ENCODE measurements at regions of chr10 and their contacts with region 1.

Region 1: DNA sequence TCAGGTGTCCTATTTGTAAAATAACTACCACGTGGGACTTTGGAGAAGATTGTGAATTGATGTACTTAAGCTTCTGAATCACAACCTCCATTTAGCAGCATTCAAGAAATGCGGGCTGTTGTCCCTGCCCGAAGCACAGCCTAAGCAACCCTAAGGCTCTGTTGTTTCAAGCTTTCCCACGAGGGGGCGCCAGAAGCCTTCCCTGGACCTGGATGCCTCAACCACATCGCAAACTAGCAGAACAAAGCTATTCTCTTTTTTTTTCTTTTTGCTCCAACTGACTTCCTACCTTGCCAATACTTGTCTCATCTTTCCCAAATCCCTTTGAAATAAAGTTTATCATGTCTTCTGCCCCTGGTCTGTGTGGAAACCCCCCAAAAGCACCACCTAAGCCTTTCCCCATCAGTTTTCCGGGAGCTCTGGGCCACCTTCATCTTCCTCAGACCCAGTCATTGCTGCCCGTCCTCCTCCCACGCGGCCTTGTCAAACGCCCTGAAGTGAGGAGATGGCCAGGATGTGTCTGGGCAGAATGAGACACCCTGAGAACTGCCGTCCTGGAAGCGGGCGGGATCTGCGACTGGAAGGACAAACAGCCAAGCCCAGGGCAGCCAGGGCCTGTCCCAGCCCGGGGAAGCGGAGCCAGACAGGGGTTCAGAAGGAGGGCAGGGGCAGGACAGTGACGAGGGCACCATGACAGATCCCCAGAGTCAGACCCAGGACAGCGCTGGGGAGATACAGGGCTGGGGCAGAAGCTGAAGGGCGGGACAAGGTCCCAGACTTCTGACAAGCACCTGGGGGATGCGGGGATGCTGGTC is 112.7 kb downstream of the SLIT1 start:
- DNase-seq: peak; percentile 94
- ATAC-seq: peak; percentile 82
- H3K4me3 Mint-ChIP-seq: no peak overlapping the region
- H3K27ac Mint-ChIP-seq: no peak overlapping the region
- H3K4me1 Mint-ChIP-seq: peaks cover 10% of the 10 kb centered on the region
- H3K27me3 Mint-ChIP-seq: peaks cover 22% of the 10 kb centered on the region
- CTCF ChIP-seq: peak; percentile 87

Region 2: GRCh38 chr10:97016728-97017473 is 56.2 kb before region 1 on chr10:
- CTCF ChIA-PET with region 1: no interaction called
- POLR2A ChIA-PET with region 1: no interaction called
- intact Hi-C with region 1: no loop called
- DNase-seq: peak; percentile 88
- ATAC-seq: peak; percentile 81
- H3K4me3 Mint-ChIP-seq: peak overlapping the region; percentile 59
- H3K27ac Mint-ChIP-seq: peak overlapping the region; percentile 81
- H3K4me1 Mint-ChIP-seq: peaks cover 11% of the 10 kb centered on the region
- H3K27me3 Mint-ChIP-seq: no peaks in the 10 kb centered on the region
- CTCF ChIP-seq: no peak

Region 3: DNA sequence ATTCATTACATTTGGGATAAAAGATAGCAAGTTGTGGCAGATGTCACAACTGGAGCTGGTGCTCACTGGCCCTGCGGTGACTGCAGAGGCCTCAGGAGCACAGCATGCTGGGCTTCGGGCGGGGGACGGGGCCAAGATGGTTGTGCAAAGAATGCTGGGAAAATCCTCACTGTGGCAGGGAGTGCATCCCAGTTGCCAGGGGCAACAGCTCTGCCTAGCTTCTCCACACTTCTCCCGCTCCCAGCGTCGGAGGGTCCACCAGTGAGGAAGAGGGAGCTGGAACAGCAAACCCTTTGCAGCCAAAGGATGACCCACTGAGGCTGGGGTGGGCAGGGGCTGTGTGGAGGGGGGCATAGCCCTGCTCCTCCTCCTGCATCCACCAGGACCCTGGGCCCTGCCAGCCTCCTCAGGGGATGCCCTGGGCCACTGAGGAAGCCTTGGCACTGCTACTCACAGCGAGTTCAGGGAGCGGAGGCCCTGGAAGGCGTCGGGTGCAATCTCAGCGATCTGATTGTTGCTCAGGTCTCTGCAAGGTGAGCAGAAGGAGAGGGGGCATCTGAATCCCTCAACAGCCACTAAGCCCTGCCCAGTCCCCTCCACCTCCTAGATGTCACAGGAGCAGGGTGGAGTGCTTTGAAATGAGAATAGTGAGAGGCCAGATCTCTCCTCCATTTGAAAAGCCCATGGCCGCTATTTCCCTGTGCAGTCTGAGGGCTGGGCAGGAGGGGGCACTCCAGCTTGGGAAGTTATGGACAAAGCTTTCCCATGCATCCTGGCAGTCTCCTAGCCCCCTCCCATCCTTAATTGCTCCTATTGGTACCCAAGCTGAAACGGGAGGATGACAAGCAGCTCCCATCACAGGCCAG is 13.8 kb before region 1 on chr10:
- CTCF ChIA-PET with region 1: interaction called, 17 read pairs
- POLR2A ChIA-PET with region 1: no interaction called
- intact Hi-C with region 1: no loop called
- DNase-seq: no peak
- ATAC-seq: no peak
- H3K4me3 Mint-ChIP-seq: no peak overlapping the region
- H3K27ac Mint-ChIP-seq: no peak overlapping the region
- H3K4me1 Mint-ChIP-seq: no peaks in the 10 kb centered on the region
- H3K27me3 Mint-ChIP-seq: no peaks in the 10 kb centered on the region
- CTCF ChIP-seq: no peak

Region 4: DNA sequence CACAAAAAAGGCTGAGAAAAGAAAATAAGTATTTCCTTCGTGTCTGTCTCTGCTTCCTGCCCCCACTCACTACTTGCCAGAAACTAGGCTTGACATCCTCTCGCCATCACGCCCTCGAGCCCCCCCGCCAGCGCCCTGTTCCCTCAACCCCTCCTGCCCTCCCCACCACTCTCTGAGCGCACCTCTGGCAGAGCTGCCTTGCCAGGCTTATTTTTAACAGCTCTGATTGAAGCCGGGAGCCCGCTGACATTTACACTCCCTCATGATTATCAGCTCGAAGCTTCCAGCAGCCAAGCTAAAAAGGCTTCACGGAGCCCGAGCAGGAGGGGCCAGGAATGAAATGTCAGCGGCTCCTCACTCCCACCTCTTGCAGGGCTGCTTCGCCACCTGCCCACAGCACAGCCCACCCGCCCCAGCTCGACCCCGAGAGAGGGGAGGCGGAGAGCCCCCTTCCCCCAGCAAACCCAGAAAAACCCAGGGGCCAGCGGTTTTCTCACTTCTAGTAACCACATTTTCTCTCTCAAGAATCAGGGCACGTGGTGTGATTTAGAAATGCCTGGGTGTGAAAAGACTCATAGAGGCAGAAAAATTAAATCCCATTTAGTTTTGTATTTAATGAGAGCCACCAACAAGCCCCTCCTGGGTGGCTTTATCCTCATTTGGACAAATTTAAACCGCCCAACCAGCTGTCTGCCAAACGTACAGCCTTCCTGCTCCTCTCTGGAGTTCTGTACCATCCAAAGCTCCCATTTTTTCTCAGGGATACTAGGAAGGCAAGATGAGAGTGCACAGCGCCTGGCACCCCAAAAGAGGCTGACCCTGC is 23.4 kb after region 1 on chr10:
- CTCF ChIA-PET with region 1: interaction called, 18 read pairs
- POLR2A ChIA-PET with region 1: no interaction called
- intact Hi-C with region 1: no loop called
- DNase-seq: peak; percentile 61
- ATAC-seq: peak; percentile 79
- H3K4me3 Mint-ChIP-seq: no peak overlapping the region
- H3K27ac Mint-ChIP-seq: no peak overlapping the region
- H3K4me1 Mint-ChIP-seq: peaks cover 28% of the 10 kb centered on the region
- H3K27me3 Mint-ChIP-seq: peaks cover 15% of the 10 kb centered on the region
- CTCF ChIP-seq: no peak

Region 5: DNA sequence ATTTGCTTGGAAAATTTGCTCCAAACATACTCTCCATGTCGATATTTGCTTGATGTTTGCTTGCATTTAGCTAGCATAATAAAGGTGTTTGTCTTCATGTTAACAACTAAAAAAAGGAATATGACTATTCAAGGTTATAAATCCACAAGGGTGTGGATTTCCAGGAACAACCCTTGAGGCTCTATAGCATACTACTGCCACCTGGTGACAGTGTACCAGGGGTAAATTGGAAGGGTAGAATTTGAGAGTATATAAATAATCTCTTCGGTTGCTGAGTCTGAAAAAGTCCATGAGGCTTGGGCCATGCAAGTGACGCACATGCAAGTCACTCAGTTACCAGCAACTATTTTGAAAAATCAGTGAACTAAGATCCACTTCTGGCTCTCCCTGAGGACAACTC is 44.3 kb after region 1 on chr10:
- CTCF ChIA-PET with region 1: interaction called, 44 read pairs
- POLR2A ChIA-PET with region 1: no interaction called
- intact Hi-C with region 1: loop called (anchors 5 kb)
- DNase-seq: peak; percentile 19
- ATAC-seq: no peak
- H3K4me3 Mint-ChIP-seq: no peak overlapping the region
- H3K27ac Mint-ChIP-seq: no peak overlapping the region
- H3K4me1 Mint-ChIP-seq: no peaks in the 10 kb centered on the region
- H3K27me3 Mint-ChIP-seq: peaks cover 3% of the 10 kb centered on the region
- CTCF ChIP-seq: peak; percentile 51

Region 6: DNA sequence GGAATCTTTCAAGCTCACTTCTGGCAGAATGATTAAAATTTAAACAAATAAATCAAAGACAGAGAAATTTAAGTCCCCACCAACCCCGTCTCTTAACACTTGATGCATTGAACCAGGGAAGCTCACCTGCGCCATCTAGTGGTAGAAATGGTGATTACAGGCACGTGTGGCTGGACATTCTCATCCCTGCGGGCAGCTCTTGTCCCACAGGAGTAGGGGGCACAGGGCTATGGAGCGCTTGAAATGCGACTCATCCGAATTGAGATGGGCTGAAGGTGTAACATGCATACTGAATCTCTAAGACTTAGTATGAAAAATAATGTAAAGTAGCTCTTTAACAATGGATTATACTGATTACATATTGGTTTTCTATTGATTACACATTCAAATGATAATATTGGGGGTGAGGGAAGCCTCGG is 137.5 kb after region 1 on chr10:
- CTCF ChIA-PET with region 1: interaction called, 407 read pairs
- POLR2A ChIA-PET with region 1: interaction called, 7 read pairs
- intact Hi-C with region 1: loop called (anchors 2 kb)
- DNase-seq: peak; percentile 84
- ATAC-seq: peak; percentile 78
- H3K4me3 Mint-ChIP-seq: no peak overlapping the region
- H3K27ac Mint-ChIP-seq: no peak overlapping the region
- H3K4me1 Mint-ChIP-seq: no peaks in the 10 kb centered on the region
- H3K27me3 Mint-ChIP-seq: no peaks in the 10 kb centered on the region
- CTCF ChIP-seq: peak; percentile 99

Region 7: GRCh38 chr10:97222326-97222961 is 149.4 kb after region 1 on chr10:
- CTCF ChIA-PET with region 1: interaction called, 23 read pairs
- POLR2A ChIA-PET with region 1: no interaction called
- intact Hi-C with region 1: no loop called
- DNase-seq: no peak
- ATAC-seq: no peak
- H3K4me3 Mint-ChIP-seq: no peak overlapping the region
- H3K27ac Mint-ChIP-seq: no peak overlapping the region
- H3K4me1 Mint-ChIP-seq: peaks cover 24% of the 10 kb centered on the region
- H3K27me3 Mint-ChIP-seq: no peaks in the 10 kb centered on the region
- CTCF ChIP-seq: no peak

Measured in activated CD8-positive, alpha-beta T cell treated with anti-CD3 and anti-CD28 coated beads for 36 hours (primary cell).